GM12878 (cell line): ENCODE measurements at regions of chr10 and their contacts with region 1.

Region 1: GRCh38 chr10:105950410-105950809 is 1214.1 kb downstream of the SORCS1 start:
- DNase-seq: peak; percentile 5
- ATAC-seq: peak; percentile 76
- H3K4me3 ChIP-seq: no peak overlapping the region
- H3K27ac ChIP-seq: no peak overlapping the region
- H3K4me1 ChIP-seq: no peaks in the 10 kb centered on the region
- H3K27me3 ChIP-seq: no peaks in the 10 kb centered on the region
- CTCF ChIP-seq: peak; percentile 57 to 81 (median 72)
- EP300 ChIP-seq: no peak
- POLR2A ChIP-seq: no peak
- RAD21 ChIP-seq: peak; percentile 77

Region 2: DNA sequence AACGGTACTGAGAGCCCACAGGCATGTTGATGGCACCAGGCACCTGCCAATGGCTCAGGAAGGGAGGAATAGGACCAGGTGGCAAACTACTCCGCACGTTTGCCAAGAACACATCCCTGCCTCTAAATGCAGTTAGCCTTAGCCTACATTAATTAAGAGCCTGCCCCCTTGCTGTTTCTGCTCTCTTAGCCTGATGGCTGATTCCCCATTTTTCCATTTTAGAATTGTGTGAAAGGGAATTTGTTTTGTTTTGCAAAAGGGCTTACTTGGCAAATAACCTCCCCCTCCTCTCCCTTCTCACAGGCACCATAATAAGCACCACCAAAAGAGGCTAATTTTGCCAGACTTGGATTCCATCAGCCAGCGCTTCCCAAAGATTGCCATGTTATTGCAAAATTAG is 106.2 kb before region 1 on chr10:
- CTCF ChIA-PET with region 1: interaction called, 4 read pairs
- POLR2A ChIA-PET with region 1: no interaction called
- RAD21 ChIA-PET with region 1: interaction called, 4 read pairs
- SMC1A ChIA-PET with region 1: interaction called, 16 read pairs
- in situ Hi-C with region 1: no loop called
- intact Hi-C with region 1: no loop called
- DNase-seq: no peak
- ATAC-seq: no peak
- H3K4me3 ChIP-seq: no peak overlapping the region
- H3K27ac ChIP-seq: no peak overlapping the region
- H3K4me1 ChIP-seq: peaks cover 2% of the 10 kb centered on the region; the same call in 1 of the 2 replicates
- H3K27me3 ChIP-seq: no peaks in the 10 kb centered on the region
- CTCF ChIP-seq: no peak
- EP300 ChIP-seq: no peak
- POLR2A ChIP-seq: no peak
- RAD21 ChIP-seq: no peak

Region 3: GRCh38 chr10:105963334-105963884 is 13.0 kb after region 1 on chr10:
- CTCF ChIA-PET with region 1: interaction called, 16 read pairs
- POLR2A ChIA-PET with region 1: no interaction called
- RAD21 ChIA-PET with region 1: interaction called, 4 read pairs
- SMC1A ChIA-PET with region 1: interaction called, 6 read pairs
- in situ Hi-C with region 1: no loop called
- intact Hi-C with region 1: no loop called
- DNase-seq: no peak
- ATAC-seq: no peak
- H3K4me3 ChIP-seq: no peak overlapping the region
- H3K27ac ChIP-seq: no peak overlapping the region
- H3K4me1 ChIP-seq: no peaks in the 10 kb centered on the region
- H3K27me3 ChIP-seq: no peaks in the 10 kb centered on the region
- CTCF ChIP-seq: no peak
- EP300 ChIP-seq: no peak
- POLR2A ChIP-seq: no peak
- RAD21 ChIP-seq: no peak

Region 4: DNA sequence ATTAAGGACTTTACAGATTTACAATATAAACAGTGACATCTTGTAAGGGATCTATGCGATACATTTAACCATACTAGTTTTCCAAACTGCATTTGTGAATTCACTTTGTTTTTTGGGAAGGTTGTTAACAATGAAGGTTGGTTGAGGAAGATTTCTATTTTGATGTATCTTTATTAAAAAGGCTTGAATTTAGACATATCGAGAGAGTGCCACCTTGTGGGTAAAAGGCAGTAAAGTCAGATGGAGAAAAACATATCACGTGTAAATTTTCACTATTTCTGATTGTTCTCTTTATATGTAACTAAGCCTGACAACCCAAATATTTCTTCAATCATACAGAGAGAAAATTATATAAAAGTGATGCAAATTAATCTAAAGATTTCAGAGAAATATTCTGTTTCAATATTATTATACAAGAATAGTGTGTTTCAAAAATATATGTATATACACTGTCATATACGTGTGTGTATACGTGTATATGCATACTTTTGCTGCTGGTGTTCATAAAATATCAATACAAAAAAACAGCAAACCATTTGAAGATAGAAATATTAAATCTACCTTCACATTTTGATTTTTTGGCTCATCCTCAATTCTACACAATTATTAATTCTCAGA is 225.5 kb after region 1 on chr10:
- CTCF ChIA-PET with region 1: interaction called, 6 read pairs
- POLR2A ChIA-PET with region 1: no interaction called
- RAD21 ChIA-PET with region 1: interaction called, 6 read pairs
- SMC1A ChIA-PET with region 1: interaction called, 5 read pairs
- in situ Hi-C with region 1: loop called (anchors 10 kb)
- intact Hi-C with region 1: loop called (anchors 2 kb)
- DNase-seq: no peak
- ATAC-seq: 0 out of 3 replicates have a peak, but pooled peaks have one; percentile 31
- H3K4me3 ChIP-seq: no peak overlapping the region
- H3K27ac ChIP-seq: no peak overlapping the region
- H3K4me1 ChIP-seq: no peaks in the 10 kb centered on the region
- H3K27me3 ChIP-seq: no peaks in the 10 kb centered on the region
- CTCF ChIP-seq: peak in 2 of 3 experiments; percentile 36 to 37; a peak in 3 of 6 replicates
- EP300 ChIP-seq: no peak
- POLR2A ChIP-seq: no peak
- RAD21 ChIP-seq: peak; percentile 52